GM10248 (cell line): ENCODE measurements at regions of chr6 and their contacts with region 1.

Region 1: DNA sequence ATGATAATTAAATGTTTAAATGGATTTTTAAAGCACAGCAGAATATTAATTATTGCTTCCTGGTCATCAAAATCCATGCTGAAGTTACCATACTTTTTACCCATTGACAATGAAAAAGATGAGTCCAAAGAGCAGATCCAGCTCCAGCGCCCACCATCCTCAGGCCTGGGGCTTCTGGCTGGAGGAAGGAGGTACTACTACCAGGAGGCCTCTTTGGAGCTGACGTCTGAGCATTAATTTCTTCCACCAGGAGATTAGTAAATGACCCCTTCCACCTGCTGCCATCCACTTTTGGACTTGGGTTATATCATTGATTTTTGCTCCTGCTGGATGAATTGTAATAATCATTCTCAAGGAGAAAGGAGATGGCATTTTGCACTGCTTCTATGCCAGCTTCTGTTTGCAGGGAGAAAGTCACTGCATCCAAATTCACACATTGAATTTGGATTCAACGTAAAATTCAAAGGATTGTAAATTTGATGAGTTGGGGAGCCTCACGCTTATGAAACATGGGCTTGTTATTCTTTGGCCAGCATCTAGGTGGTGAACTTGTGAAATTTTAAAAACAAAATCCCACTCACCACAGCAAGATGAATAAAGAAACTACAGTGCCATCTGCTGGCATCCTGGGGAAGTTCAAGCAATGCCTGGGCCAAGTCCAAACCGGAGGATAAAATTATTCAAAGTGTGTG is 121.8 kb downstream of the SASH1 start:
- DNase-seq: peak; percentile 64
- CTCF ChIP-seq: peak; percentile 88

Region 2: GRCh38 chr6:148451690-148452089 is 12.8 kb before region 1 on chr6:
- CTCF ChIA-PET with region 1: interaction called, 13 read pairs
- POLR2A ChIA-PET with region 1: no interaction called
- DNase-seq: no peak
- CTCF ChIP-seq: no peak